ENCODE measurements at regions of chr3 and their contacts with region 1.

Region 1: DNA sequence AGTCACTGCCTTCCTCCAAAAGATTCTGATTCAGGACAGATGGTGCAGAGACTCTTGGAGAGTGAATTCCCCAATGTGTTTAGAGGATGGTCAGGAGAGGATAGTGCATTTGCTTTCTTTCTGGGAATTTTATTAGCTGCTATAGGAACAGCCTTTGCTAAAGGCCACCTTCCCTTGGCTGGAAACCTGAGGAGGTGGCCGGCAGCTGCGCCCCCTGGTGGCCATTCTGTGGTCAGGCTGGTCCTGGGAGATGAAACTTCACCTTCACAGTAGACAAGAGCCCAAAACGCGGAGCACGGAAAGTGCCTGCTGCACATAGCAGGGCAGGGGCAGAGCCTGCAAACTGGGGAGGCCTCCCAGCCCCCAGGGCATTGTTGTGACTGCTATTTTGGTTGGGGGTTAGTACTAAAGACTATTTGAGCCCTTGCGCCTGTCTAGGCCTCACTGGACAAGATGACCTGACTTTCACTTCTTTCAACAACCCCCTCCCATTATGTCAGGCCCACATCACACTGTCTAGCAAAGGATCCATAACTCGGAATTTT is 34.3 kb downstream of the SEC22C start:
- DNase-seq: peak; percentile 60 to 81
- ATAC-seq: peak; percentile 67 to 88 (median 79)
- H3K4me3 ChIP-seq: no peak overlapping the region
- H3K27ac ChIP-seq: no peak overlapping the region
- H3K4me1 ChIP-seq: no peaks in the 10 kb centered on the region
- H3K27me3 ChIP-seq: no peaks in the 10 kb centered on the region
- CTCF ChIP-seq: peak; percentile 97

Region 2: GRCh38 chr3:42224658-42225421 is 322.6 kb before region 1 on chr3:
- intact Hi-C with region 1: loop called (anchors 5 kb)
- DNase-seq: no peak
- ATAC-seq: peak; percentile 70 to 92 (median 80)
- H3K4me3 ChIP-seq: peak overlapping the region; percentile 44
- H3K27ac ChIP-seq: peak overlapping the region; percentile 79
- H3K4me1 ChIP-seq: peaks cover 14% of the 10 kb centered on the region
- H3K27me3 ChIP-seq: no peaks in the 10 kb centered on the region
- CTCF ChIP-seq: no peak

Region 3: DNA sequence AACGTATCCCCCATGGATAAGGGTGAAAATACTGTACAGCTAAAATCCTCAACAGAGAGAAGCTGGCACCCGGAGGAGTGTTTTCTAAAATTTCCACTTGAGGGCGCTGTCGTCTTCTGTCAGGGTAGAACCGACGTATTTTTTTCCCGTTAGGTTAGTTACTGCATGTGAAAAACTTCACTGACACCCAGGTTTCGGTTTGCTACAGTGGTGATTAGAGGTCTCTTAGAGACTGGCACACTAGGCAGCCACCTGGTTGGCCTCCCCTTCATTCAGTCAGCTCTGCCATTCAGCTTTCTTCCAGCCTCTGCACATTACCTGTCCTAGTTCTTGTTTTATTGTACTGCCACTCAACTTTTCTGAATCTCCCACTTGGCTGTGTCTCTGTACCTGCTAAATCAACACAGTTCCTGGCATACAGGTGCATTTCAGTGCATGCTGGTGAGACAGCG is 299.9 kb before region 1 on chr3:
- intact Hi-C with region 1: loop called in 1 of 2 experiments (anchors 5 kb)
- DNase-seq: no peak
- ATAC-seq: peak in 2 of 4 donors; percentile 46 to 56
- H3K4me3 ChIP-seq: no peak overlapping the region
- H3K27ac ChIP-seq: no peak overlapping the region
- H3K4me1 ChIP-seq: no peaks in the 10 kb centered on the region
- H3K27me3 ChIP-seq: peaks cover 0 to 4% (median 0%) of the 10 kb centered on the region in 3 donors
- CTCF ChIP-seq: peak; percentile 52

Region 4: DNA sequence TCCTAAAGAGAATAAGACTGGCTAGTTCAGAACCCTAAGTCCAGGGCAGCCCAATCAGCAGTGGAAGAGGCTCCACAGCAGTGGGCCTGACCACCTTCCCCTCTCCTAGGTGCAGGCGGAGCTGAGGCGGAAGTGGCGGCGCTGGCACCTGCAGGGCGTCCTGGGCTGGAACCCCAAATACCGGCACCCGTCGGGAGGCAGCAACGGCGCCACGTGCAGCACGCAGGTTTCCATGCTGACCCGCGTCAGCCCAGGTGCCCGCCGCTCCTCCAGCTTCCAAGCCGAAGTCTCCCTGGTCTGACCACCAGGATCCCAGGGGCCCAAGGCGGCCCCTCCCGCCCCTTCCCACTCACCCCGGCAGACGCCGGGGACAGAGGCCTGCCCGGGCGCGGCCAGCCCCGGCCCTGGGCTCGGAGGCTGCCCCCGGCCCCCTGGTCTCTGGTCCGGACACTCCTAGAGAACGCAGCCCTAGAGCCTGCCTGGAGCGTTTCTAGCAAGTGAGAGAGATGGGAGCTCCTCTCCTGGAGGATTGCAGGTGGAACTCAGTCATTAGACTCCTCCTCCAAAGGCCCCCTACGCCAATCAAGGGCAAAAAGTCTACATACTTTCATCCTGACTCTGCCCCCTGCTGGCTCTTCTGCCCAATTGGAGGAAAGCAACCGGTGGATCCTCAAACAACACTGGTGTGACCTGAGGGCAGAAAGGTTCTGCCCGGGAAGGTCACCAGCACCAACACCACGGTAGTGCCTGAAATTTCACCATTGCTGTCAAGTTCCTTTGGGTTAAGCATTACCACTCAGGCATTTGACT is 11.3 kb before region 1 on chr3:
- intact Hi-C with region 1: no loop called
- DNase-seq: no peak
- ATAC-seq: peak in 1 of 4 donors; percentile 37
- H3K4me3 ChIP-seq: no peak overlapping the region
- H3K27ac ChIP-seq: no peak overlapping the region
- H3K4me1 ChIP-seq: no peaks in the 10 kb centered on the region
- H3K27me3 ChIP-seq: no peaks in the 10 kb centered on the region
- CTCF ChIP-seq: no peak

Region 5: DNA sequence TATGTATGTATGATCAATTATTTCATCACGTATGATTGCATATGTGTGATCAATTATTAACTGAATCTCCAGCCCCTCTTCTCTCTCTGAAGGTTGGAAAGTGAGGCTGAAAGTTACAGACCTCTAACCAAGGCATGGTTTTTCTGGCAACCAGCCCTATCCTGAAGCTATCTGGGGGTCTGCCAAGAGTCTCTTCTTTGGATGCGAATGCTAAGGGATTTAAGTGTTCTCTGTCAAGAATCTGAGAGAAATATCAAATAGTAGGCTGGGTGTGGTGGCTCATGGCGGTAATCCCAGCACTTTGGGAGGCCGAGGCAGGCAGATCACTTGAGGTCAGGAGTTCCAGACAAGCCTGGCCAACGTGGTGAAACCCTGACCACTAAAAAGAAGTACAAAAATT is 61.1 kb after region 1 on chr3:
- intact Hi-C with region 1: no loop called
- DNase-seq: no peak
- ATAC-seq: peak in 1 of 4 donors; percentile 14
- H3K4me3 ChIP-seq: no peak overlapping the region
- H3K27ac ChIP-seq: peak overlapping the region; percentile 53
- H3K4me1 ChIP-seq: peaks cover 35% of the 10 kb centered on the region
- H3K27me3 ChIP-seq: no peaks in the 10 kb centered on the region
- CTCF ChIP-seq: no peak

Region 6: DNA sequence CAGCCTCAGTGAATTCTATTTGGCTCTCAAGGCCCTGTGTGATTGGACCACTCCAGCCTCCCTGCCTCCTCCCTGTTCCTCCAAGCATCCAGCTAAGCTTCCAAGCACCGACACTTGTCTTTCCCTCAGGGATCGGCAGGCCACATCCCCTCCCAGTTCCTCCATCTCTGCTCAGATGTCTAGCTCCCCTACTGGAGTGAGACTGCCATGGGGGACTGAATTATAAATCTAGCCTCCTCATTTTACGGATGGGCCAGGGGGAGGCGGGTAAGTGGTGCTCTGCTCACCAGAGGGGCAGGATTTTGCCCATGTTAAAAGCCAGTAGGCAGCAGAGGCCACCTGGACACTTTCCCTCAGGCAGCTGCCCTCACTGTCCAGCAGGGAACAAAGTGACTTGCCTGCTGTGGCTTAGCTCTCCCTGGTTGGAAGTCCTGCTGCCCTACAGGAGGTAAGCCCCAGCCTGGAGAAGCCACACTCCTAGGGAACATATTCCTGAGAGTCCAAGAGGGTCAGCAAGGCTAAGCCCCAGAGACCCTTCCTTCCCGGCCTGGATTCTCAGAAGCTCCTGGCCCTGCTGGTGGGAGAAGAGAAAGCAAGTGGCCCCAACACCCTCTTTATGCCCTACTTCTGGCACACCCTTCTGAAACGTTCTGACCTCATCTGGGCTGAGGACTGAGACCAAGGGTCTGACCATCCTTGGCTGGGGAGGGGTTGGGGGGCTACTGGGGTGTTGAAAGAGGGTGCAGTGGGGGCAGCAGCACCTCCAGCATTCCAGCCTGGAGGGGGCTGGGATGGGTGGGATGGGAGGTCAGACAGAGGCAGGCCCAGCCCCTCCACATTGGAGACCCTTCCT is 164.2 kb after region 1 on chr3:
- intact Hi-C with region 1: no loop called
- DNase-seq: peak in 1 of 2 donors; percentile 34
- ATAC-seq: peak; percentile 20 to 39 (median 30)
- H3K4me3 ChIP-seq: no peak overlapping the region
- H3K27ac ChIP-seq: no peak overlapping the region
- H3K4me1 ChIP-seq: peaks cover under 1% of the 10 kb centered on the region
- H3K27me3 ChIP-seq: no peaks in the 10 kb centered on the region
- CTCF ChIP-seq: no peak